ENCODE measurements at regions of chr4 and their contacts with region 1.

Region 1: DNA sequence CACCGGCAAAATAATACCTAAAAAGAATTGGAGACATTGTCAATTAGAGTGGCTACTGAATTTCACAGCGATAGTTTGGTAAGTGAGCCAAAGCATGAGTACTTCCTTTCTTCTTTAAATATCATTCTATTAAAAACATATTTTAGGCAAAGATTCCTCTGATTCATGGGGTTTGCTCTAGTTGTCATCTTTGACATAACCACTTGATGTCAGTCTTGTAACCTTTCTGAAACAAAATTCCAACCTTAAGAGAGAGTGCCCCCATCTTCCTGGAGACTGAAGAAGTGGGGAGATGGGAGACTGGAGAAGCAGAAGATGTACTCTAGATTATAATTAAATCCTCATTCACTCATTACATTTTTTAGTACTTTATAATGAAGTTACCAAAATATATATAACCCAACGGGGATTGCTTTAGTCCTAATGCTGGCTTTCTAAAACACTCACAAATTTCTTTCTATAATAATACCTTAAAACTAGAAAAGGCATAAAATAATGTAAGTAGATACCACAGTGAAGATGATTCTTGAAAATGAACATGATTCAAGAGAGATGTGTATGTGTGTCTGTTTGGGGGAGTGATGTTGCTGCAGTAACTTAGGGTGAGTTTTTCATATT is 96.4 kb downstream of the EMCN start:
- DNase-seq: no peak
- ATAC-seq: peak in 6 of 8 donors; percentile 43 to 81 (median 58)
- H3K4me3 ChIP-seq: peak overlapping the region in 3 of 10 donors; percentile 9 to 21 (median 10)
- H3K27ac ChIP-seq: peak overlapping the region in 5 of 10 donors; percentile 6 to 56 (median 37)
- H3K4me1 ChIP-seq: peaks cover 0 to 37% (median 8%) of the 10 kb centered on the region in 9 donors
- H3K27me3 ChIP-seq: no peaks in the 10 kb centered on the region
- CTCF ChIP-seq: peak; percentile 18 to 77 (median 57)

Region 2: DNA sequence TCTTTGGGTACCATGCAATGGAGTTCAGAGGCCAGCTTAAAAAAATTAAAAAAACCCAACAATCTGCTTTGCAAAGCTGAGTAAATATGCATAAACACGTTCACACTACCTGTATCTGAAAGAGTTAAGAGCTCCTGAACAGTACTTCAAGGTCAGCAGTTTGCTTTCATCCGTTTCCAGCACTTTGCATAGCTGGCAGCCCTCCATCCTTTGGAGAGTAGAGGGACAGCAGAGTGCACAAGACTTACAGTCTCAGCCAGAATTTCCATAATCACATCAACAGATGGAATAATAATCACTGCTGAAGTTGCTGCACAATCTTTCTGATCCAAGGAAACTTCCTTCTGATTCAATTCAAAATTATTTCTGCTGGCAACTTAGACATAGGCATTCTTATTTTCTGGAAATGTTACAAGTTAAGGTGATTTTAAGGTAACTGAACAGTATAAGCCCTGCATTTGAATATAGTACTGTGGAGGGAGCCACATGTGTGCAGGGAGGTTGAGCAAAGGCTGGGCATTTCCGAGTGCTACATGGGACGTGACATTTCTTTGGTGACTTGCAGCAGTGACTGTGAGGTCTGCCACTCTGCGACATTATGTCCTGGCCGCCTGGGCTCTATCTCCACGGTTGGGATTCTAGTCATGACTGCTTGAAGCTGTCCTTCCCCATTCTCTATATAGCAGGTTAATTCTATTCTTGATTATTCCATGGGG is 169.8 kb after region 1 on chr4:
- intact Hi-C with region 1: loop called in 1 of 10 experiments (anchors 10 kb)
- DNase-seq: peak; percentile 32 to 82
- ATAC-seq: peak; percentile 70 to 97 (median 93)
- H3K4me3 ChIP-seq: peak overlapping the region in 1 of 10 donors; percentile 5
- H3K27ac ChIP-seq: peak overlapping the region in 2 of 10 donors; percentile 41 to 50
- H3K4me1 ChIP-seq: peaks cover 0 to 29% (median 11%) of the 10 kb centered on the region in 9 donors
- H3K27me3 ChIP-seq: no peaks in the 10 kb centered on the region
- CTCF ChIP-seq: no peak

Region 3: DNA sequence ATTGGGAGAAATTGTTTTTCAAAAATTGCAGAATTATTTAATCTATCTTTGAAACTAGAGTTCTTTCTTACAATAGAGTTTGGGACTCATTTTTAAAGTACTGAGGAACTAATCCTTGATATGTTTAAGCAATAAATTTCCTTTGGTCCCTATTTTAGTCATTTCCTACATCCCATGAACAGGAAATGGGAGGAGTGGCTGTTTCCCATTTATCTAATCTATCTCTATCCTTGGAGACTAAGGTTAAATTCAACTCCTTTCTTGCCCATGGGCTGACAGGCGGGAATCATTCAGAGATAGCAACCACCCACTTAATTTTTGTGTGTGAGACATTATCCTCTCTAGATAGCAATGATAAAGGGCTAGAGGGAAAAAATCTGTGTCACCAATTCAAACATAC is 227.9 kb after region 1 on chr4:
- intact Hi-C with region 1: loop called in 1 of 10 experiments (anchors 10 kb)
- DNase-seq: no peak
- ATAC-seq: peak in 5 of 8 donors; percentile 44 to 83 (median 79)
- H3K4me3 ChIP-seq: no peak overlapping the region
- H3K27ac ChIP-seq: peak overlapping the region in 5 of 10 donors; percentile 5 to 51 (median 41)
- H3K4me1 ChIP-seq: peaks cover 0 to 26% (median 18%) of the 10 kb centered on the region in 9 donors
- H3K27me3 ChIP-seq: no peaks in the 10 kb centered on the region
- CTCF ChIP-seq: no peak

Region 4: GRCh38 chr4:100736641-100737451 is 315.4 kb after region 1 on chr4:
- intact Hi-C with region 1: loop called in 6 of 10 experiments (anchors 2 to 5 kb)
- DNase-seq: peak in 1 of 2 donors; percentile 34
- ATAC-seq: peak; percentile 53 to 92 (median 76)
- H3K4me3 ChIP-seq: no peak overlapping the region
- H3K27ac ChIP-seq: peak overlapping the region in 9 of 10 donors; percentile 20 to 63 (median 52)
- H3K4me1 ChIP-seq: peaks cover 0 to 34% (median 11%) of the 10 kb centered on the region in 9 donors
- H3K27me3 ChIP-seq: no peaks in the 10 kb centered on the region
- CTCF ChIP-seq: no peak

Measured in heart right ventricle (tissue), 16 donors.